ENCODE measurements at regions of chr19 and their contacts with region 1.

Region 1: GRCh38 chr19:46746281-46747013 is at the start of gene STRN4:
- DNase-seq: peak; percentile 72 to 94 (median 92)
- ATAC-seq: peak; percentile 54
- H3K4me3 ChIP-seq: peak within 1 kb of the TSS; percentile 98
- H3K27ac ChIP-seq: peak within 1 kb of the TSS; percentile 88
- H3K4me1 ChIP-seq: peaks cover 18 to 34% of the 10 kb centered on the region in 2 experiments; a peak in 4 of 5 replicates
- H3K27me3 ChIP-seq: no peaks in the 10 kb centered on the region
- CTCF ChIP-seq: no peak
- EP300 ChIP-seq: no peak
- POLR2A ChIP-seq: no peak
- RAD21 ChIP-seq: no peak
- polyA plus RNA-seq, gene STRN4: 0.62 to 1.7 TPM

Region 2: DNA sequence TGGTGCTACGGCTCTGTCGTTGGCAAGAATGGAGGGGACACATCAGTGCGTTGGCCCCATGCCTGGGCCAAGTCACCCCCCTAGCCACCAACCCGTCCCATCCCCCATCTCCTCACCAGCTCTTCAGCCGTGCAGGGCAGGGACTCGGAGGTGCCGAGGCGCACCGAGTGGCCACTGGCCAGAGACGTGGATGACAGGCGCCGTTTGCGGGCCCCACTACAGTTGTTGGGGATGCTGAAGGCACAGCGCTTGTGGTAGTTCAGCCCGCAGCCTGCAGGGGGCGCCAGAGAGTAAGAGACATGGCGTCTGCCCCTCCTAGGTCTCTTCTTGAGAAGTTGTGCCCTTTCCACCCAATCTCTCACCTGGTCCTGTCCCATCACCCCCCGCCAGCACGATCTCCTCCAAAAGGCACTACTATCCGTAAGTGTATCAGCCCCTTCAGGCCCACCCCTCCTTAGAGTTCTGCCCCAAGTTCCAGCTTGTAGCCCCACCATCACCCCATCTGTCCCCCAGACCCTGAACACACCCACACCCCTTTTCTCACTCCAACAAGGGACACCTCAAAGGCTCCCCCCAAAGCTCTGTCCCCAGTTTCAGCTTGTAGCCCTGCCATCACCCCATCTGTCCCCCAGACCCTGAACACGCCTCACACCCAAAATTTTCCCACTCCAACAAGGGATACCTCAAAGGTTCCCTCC is 41.9 kb before region 1 on chr19:
- CTCF ChIA-PET with region 1: no interaction called
- POLR2A ChIA-PET with region 1: no interaction called
- in situ Hi-C with region 1: no loop called
- intact Hi-C with region 1: loop called (anchors 2 kb)
- DNase-seq: peak; percentile 79 to 84 (median 82)
- ATAC-seq: peak; percentile 98
- H3K4me3 ChIP-seq: no peak overlapping the region
- H3K27ac ChIP-seq: no peak overlapping the region
- H3K4me1 ChIP-seq: peaks cover 0 to 6% of the 10 kb centered on the region in 2 experiments; a peak in 1 of 5 replicates
- H3K27me3 ChIP-seq: no peaks in the 10 kb centered on the region
- CTCF ChIP-seq: peak; percentile 88 to 91 (median 90)
- EP300 ChIP-seq: no peak
- POLR2A ChIP-seq: no peak
- RAD21 ChIP-seq: peak; percentile 48 to 76